ENCODE measurements at regions of chr11 and their contacts with region 1.

Region 1: DNA sequence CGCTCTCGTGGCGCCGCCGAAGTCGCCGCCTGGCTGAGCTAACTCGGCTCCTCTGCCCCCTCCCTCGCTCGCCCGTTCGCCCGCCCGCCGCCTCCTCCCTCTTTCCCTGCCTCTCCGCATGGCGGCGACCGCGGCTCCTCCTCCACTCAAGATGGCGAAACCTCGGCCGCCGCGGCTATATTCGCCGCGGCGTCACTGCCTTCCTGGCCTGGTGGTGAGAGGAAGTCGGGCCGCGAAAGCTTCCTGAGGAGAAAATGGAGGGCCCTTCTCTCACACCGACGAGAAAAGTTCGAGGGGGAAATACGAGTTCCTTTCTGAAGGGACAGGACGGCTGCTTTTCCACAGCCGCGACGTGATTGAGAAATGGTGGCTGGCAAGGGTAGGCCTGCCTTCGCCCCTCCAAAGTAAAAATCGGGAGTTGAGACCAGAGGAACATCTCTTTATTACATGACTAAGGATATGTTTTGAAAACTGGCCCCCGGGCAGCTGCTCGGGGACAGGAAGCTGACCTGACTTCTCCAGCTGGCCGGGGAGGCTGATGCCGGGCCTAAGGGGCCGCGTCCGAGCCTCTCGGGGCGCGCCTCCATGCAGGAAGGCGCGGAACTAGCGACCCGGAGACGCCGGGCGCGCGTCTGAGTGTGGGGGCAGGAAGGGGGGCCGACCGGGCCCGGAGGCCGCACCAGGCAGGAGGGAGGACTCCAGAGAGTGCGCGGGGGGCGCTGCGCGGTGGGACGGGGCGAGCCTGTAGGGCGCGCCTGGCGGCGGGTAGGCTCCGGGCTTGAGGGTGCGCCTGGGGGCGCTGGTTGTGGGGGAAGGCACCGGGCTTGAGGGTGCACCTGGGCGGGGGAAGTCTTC is at the start of gene DDX6:
- DNase-seq: peak; percentile 95
- H3K4me3 Mint-ChIP-seq: peak within 1 kb of the TSS; percentile 99
- H3K27ac Mint-ChIP-seq: peak within 1 kb of the TSS; percentile 99
- H3K4me1 Mint-ChIP-seq: peaks cover 30% of the 10 kb centered on the region
- H3K27me3 Mint-ChIP-seq: peaks cover 3% of the 10 kb centered on the region

Region 2: GRCh38 chr11:118572061-118572980 is 219.0 kb before region 1 on chr11 and contains the start of gene ARCN1:
- CTCF ChIA-PET with region 1: no interaction called
- DNase-seq: peak; percentile 84
- H3K4me3 Mint-ChIP-seq: peak within 1 kb of the TSS; percentile 99
- H3K27ac Mint-ChIP-seq: peak within 1 kb of the TSS; percentile 96
- H3K4me1 Mint-ChIP-seq: peaks cover 47% of the 10 kb centered on the region
- H3K27me3 Mint-ChIP-seq: no peaks in the 10 kb centered on the region

Region 3: GRCh38 chr11:118851970-118852369 is 60.6 kb after region 1 on chr11:
- CTCF ChIA-PET with region 1: no interaction called
- DNase-seq: no peak
- H3K4me3 Mint-ChIP-seq: no peak overlapping the region
- H3K27ac Mint-ChIP-seq: no peak overlapping the region
- H3K4me1 Mint-ChIP-seq: no peaks in the 10 kb centered on the region
- H3K27me3 Mint-ChIP-seq: peaks cover 21% of the 10 kb centered on the region

Region 4: DNA sequence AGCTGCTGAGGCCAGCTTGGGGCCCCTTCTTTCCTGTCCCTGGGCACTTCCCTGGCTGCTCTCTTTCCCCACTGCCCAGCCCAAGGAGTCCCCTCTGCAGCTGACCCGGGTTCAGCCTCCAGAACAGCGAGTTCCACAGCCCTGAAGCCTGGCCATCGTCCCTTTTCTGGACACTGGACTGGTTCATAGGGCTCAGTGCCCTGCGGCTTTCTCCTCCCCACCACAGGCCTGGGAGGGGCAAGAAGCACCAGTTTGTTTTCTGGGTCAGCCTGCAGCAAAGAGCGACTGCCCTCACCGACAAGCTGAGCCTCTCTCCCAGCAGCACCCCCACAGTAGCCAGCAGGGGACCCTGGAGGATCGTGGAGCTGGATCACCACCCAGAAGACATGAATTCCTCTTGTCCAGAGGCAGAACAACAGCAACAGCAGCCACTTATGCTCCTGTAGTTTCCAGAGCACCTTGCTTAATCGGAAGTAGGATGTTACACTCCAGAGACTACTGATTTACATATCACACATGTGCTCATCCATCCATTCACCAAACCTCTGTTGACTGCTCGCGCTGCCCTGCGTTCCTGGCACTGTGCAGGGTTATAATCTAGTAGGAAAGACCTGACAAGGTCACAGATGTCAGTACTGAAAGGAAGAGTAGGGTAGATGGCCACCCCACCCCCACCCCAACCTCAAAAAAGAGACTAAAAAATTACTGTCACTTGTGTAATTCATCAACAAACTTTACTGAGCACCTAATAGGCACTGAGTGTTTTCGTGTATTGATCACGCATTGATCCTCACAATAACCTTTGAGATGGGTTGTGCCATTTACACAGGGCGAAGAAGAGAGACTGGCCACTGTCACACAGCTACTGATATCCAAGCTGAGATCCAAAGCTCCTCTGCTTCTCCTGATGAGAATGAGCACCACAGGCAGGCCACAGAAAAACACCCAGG is 79.3 kb after region 1 on chr11:
- CTCF ChIA-PET with region 1: interaction called, 21 read pairs
- DNase-seq: peak; percentile 50
- H3K4me3 Mint-ChIP-seq: peak overlapping the region; percentile 72
- H3K27ac Mint-ChIP-seq: peak overlapping the region; percentile 99
- H3K4me1 Mint-ChIP-seq: peaks cover 64% of the 10 kb centered on the region
- H3K27me3 Mint-ChIP-seq: peaks cover 5% of the 10 kb centered on the region

Region 5: GRCh38 chr11:118883368-118884071 is 92.2 kb after region 1 on chr11 and contains the start of gene CXCR5:
- CTCF ChIA-PET with region 1: interaction called, 21 read pairs
- DNase-seq: no peak
- H3K4me3 Mint-ChIP-seq: no peak within 1 kb of the TSS
- H3K27ac Mint-ChIP-seq: peak within 1 kb of the TSS; percentile 76
- H3K4me1 Mint-ChIP-seq: peaks cover 50% of the 10 kb centered on the region
- H3K27me3 Mint-ChIP-seq: peaks cover 26% of the 10 kb centered on the region

Region 6: DNA sequence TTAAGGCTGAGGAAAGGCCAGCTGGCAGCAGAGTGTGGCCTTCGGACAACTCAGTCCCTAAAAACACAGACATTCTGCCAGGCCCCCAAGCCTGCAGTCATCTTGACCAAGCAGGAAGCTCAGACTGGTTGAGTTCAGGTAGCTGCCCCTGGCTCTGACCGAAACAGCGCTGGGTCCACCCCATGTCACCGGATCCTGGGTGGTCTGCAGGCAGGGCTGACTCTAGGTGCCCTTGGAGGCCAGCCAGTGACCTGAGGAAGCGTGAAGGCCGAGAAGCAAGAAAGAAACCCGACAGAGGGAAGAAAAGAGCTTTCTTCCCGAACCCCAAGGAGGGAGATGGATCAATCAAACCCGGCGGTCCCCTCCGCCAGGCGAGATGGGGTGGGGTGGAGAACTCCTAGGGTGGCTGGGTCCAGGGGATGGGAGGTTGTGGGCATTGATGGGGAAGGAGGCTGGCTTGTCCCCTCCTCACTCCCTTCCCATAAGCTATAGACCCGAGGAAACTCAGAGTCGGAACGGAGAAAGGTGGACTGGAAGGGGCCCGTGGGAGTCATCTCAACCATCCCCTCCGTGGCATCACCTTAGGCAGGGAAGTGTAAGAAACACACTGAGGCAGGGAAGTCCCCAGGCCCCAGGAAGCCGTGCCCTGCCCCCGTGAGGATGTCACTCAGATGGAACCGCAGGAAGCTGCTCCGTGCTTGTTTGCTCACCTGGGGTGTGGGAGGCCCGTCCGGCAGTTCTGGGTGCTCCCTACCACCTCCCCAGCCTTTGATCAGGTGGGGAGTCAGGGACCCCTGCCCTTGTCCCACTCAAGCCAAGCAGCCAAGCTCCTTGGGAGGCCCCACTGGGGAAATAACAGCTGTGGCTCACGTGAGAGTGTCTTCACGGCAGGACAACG is 104.1 kb after region 1 on chr11:
- CTCF ChIA-PET with region 1: interaction called, 54 read pairs
- DNase-seq: peak; percentile 83
- H3K4me3 Mint-ChIP-seq: peak overlapping the region; percentile 42
- H3K27ac Mint-ChIP-seq: peak overlapping the region; percentile 93
- H3K4me1 Mint-ChIP-seq: peaks cover 72% of the 10 kb centered on the region
- H3K27me3 Mint-ChIP-seq: no peaks in the 10 kb centered on the region